Activated naive CD4-positive, alpha-beta T cell treated with anti-CD3 and anti-CD28 coated beads for 36 hours (primary cell): ENCODE measurements at regions of chr2 and their contacts with region 1.

Region 1: DNA sequence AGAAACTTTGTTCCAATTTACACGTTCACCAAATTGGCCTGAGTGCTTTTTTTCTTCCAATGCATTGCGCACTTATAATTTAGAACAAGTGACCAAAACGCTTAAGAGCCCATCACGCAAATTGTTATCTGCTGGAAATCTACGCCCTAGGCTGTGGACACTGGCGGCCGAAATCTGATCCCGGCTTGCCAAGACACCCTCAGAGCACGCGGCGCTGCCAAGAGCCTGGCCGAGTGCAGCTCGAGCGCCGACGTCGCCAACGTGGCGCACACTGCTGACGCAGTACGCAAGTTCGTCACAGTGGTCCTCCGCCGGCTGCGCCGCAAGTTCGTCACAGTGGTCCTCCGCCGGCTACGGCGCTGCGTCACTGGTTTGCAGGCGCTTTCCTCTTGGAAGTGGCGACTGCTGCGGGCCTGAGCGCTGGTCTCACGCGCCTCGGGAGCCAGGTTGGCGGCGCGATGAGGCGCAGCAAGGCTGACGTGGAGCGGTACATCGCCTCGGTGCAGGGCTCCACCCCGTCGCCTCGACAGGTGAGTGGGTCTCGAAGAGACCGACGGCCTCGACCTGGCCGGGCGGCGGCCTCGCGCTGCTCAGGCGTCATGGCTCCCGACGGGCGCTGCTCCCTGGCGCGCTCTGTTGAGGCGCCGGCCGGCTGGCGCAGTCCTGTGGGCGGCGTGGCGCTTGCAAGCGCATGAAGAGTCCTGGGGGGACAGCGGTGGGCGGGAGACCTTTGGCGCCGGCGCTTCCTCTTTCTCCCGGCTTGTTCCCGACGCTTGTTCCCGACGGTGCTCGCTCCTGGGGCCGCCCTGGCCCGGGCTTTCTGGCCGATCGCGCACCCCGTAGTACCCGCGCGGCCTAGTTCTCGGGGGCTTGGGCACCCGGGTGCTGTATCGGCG is at the start of gene RANBP2:
- DNase-seq: peak; percentile 95
- H3K4me3 Mint-ChIP-seq: peak within 1 kb of the TSS; percentile 95
- H3K27ac Mint-ChIP-seq: peak within 1 kb of the TSS; percentile 97
- H3K4me1 Mint-ChIP-seq: peaks cover 25% of the 10 kb centered on the region
- H3K27me3 Mint-ChIP-seq: no peaks in the 10 kb centered on the region
- total RNA-seq, gene RANBP2: 47.4 to 48.3 TPM

Region 2: DNA sequence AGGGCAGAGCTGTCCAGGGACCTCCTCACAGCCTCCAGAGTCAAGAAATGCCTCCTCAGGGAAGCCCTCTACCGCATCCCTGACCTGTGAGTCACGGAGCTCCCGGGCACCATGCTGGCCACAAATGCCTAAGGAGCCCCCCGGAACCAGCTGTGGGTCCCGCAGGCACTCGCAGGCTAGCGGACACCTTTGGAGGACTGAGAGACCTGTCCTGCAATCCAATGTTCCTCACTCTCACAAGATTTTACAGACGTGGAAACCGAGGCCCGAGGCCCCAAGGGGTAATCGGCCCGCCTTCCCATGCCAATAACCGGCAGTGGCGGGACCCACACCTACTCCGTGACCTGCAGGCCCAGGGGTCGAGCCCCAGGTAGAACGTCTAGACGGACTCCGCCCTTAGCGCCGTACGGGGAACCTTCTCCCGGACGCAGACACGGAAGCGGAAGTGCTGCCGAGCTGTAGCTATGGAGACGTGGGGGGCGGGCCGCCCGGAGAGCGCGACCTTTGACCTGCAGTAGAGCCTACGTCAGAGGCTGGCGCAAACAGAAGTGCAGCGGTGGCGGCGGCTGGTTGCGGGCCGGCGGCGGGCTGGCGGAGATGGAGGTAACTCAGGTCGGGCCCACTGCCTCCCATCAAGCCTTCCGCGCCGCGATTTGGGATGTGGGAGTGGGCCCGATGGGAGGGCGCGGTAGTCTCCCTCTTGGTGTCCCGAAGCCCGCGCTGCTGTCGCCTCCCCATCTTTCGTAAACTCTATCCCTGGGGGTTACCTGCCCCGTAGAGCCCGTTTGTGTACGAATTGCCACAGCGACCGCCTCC is 270.5 kb before region 1 on chr2 and contains the start of gene GCC2:
- CTCF ChIA-PET with region 1: no interaction called
- intact Hi-C with region 1: loop called (anchors 5 kb)
- DNase-seq: peak; percentile 97
- H3K4me3 Mint-ChIP-seq: peak within 1 kb of the TSS; percentile 87
- H3K27ac Mint-ChIP-seq: peak within 1 kb of the TSS; percentile 91
- H3K4me1 Mint-ChIP-seq: peaks cover 27% of the 10 kb centered on the region
- H3K27me3 Mint-ChIP-seq: no peaks in the 10 kb centered on the region
- total RNA-seq, gene GCC2: 33.5 to 39.4 TPM

Region 3: DNA sequence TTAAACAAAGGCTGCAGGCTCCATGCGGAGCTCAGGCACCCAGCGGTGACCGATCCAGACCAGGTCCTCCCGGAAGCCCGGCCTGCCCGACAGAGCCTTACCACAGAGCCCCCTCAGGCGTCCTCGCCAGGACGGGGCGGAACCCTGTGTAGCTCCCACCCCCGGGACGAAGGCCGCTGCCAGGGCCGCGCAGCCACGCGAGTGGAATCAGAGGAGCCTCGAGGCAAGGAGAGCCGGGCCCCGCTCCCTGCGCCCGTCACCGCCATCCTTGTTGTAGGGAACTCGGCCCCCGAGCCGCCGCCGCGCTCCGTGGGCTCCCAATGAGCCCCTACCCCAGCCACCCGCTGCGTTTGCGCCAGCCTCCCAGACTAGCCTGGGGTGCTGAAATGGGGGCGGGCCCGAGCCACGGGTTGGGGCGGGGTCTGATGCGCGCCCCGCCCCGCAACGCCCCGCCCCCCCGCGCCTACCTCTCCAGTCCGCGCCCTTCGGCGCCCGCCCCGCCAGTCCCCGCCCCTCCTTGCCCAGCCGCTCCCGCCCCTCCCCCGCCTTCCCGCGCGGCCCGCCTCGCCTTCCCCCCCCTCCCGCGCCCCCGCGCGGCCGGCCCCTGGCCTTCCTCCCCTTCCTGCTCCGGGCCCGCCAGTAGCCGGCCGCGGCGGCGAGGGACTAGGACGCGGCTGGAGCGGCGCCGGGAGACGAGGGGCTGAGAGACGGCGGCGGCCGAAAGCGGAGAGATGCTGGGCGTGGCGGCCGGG is 185.4 kb before region 1 on chr2 and contains the start of gene LIMS1:
- CTCF ChIA-PET with region 1: no interaction called
- intact Hi-C with region 1: loop called (anchors 1 kb)
- DNase-seq: peak; percentile 89
- H3K4me3 Mint-ChIP-seq: peak within 1 kb of the TSS; percentile 96
- H3K27ac Mint-ChIP-seq: peak within 1 kb of the TSS; percentile 82
- H3K4me1 Mint-ChIP-seq: peaks cover 31% of the 10 kb centered on the region
- H3K27me3 Mint-ChIP-seq: no peaks in the 10 kb centered on the region
- total RNA-seq, gene LIMS1: 43.8 to 47.1 TPM

Region 4: DNA sequence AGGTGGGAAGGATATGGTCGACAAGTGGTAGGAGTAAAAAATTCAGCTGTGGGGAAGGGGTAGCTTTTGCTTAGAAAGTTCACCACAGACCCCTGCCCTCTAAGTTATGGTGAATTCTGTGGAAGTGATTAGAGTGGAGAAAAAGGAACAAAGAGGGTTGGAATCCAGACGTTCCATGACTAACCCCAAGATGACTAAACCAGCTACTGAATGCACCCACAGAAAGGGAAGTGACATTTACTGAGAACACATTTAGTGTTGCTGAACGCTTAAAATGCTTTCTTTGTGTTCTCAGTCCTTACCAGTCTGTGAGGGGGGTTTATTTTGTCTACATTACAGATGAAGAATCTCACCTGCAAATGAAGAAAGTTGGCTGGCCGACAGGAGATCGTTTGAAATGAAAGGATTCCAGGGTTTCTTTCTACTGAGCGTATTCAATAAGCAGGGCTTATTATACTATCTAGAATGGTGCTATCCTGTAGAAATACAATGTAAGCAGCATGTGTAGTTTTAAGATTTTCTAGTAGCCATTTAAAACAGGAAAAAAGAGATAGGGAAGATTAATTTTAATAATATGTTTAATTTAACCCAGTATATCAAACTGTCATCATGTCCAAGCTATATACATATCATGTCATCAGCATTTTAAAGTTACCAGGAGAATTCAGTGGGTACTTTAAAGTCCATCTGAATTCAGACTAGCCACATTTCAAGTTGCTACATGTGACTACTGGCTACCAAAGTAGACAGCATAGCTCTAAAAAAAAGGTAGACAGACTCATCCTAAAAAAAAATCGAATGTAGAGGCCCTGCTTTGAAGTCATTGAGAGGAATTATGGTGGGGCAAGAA is 125.0 kb before region 1 on chr2:
- CTCF ChIA-PET with region 1: no interaction called
- intact Hi-C with region 1: no loop called
- DNase-seq: peak; percentile 30
- H3K4me3 Mint-ChIP-seq: peak overlapping the region; percentile 17
- H3K27ac Mint-ChIP-seq: no peak overlapping the region
- H3K4me1 Mint-ChIP-seq: peaks cover 49% of the 10 kb centered on the region
- H3K27me3 Mint-ChIP-seq: no peaks in the 10 kb centered on the region

Region 5: GRCh38 chr2:108607706-108608301 is 111.6 kb before region 1 on chr2:
- CTCF ChIA-PET with region 1: no interaction called
- intact Hi-C with region 1: loop called (anchors 2 kb)
- DNase-seq: peak; percentile 68
- H3K4me3 Mint-ChIP-seq: no peak overlapping the region
- H3K27ac Mint-ChIP-seq: no peak overlapping the region
- H3K4me1 Mint-ChIP-seq: peaks cover 31% of the 10 kb centered on the region
- H3K27me3 Mint-ChIP-seq: no peaks in the 10 kb centered on the region

Region 6: GRCh38 chr2:108786354-108787199 is 67.2 kb after region 1 on chr2 and contains the start of gene CCDC138:
- CTCF ChIA-PET with region 1: no interaction called
- intact Hi-C with region 1: loop called (anchors 1 kb)
- DNase-seq: peak; percentile 92
- H3K4me3 Mint-ChIP-seq: peak within 1 kb of the TSS; percentile 97
- H3K27ac Mint-ChIP-seq: peak within 1 kb of the TSS; percentile 87
- H3K4me1 Mint-ChIP-seq: peaks cover 14% of the 10 kb centered on the region
- H3K27me3 Mint-ChIP-seq: no peaks in the 10 kb centered on the region
- total RNA-seq, gene CCDC138: 7.4 to 9.5 TPM

Region 7: GRCh38 chr2:109613922-109614714 is 894.7 kb after region 1 on chr2 and contains the starts of genes SEPTIN10 and SOWAHC:
- CTCF ChIA-PET with region 1: no interaction called
- intact Hi-C with region 1: loop called (anchors 10 kb)
- DNase-seq: peak; percentile 86
- H3K4me3 Mint-ChIP-seq: peak within 1 kb of the TSS; percentile 89
- H3K27ac Mint-ChIP-seq: no peak within 1 kb of the TSS
- H3K4me1 Mint-ChIP-seq: peaks cover 20% of the 10 kb centered on the region
- H3K27me3 Mint-ChIP-seq: peaks cover 64% of the 10 kb centered on the region
- total RNA-seq, gene SEPTIN10: 2.3 to 2.7 TPM
- total RNA-seq, gene SOWAHC: 0.38 to 0.44 TPM